K562 (cell line): ENCODE measurements at regions of chr11 and their contacts with region 1.

Region 1: DNA sequence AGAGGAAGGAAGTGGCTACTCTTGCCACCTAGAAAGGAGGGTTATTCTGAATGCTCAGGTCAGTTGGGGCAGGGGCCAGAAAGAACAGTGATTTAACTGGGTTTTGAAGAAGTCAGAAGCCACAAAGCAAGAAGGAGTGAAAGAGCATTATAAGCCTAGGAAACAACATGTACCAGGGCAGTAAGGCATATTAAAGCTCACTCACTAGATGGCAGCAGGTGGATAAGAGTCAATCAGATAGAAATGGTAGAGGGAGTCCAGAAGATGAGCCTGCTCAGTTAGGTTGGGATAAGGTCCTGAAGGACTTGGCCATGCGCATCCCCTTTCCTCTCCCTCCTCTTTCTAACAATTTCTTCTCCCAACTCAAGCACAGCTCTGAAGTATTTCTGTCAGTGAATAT is 22.0 kb upstream of the PATE1 start:
- DNase-seq: peak in 2 of 4 experiments; percentile 9 to 11
- ATAC-seq: peak; percentile 60; the same call in 2 of the 3 replicates
- H3K4me3 ChIP-seq: no peak overlapping the region
- H3K27ac ChIP-seq: no peak overlapping the region
- H3K4me1 ChIP-seq: no peaks in the 10 kb centered on the region
- H3K27me3 ChIP-seq: peaks cover 10 to 22% of the 10 kb centered on the region in 2 experiments; a peak in 4 of 5 replicates
- CTCF ChIP-seq: peak in 2 of 3 experiments; percentile 7 to 51; a peak in 3 of 6 replicates
- EP300 ChIP-seq: no peak
- POLR2A ChIP-seq: no peak
- RAD21 ChIP-seq: peak; percentile 16 to 45; a peak in 3 of 4 replicates

Region 2: DNA sequence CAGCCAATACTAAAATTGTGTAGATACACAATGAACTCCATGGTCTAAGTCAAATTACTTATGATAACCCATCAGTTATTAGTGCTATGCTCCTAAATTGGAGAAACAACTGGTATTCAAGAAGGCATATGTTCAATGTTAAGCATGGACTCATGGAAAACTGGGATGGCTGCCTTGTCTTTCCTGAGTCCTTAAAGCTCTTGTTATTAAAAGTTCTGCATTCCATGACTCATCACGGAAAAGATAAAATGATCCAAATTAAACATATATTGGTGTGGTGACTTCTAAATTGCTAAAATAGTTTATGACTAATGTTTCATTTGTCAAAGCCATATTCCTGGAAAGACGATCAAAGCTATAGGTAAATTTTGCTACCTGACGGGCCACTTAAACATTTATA is 164.2 kb before region 1 on chr11:
- CTCF ChIA-PET with region 1: no interaction called
- POLR2A ChIA-PET with region 1: no interaction called
- in situ Hi-C with region 1: no loop called
- intact Hi-C with region 1: loop called (anchors 10 kb)
- DNase-seq: no peak
- ATAC-seq: no peak
- H3K4me3 ChIP-seq: no peak overlapping the region
- H3K27ac ChIP-seq: no peak overlapping the region
- H3K4me1 ChIP-seq: peaks cover 7 to 21% of the 10 kb centered on the region in 2 experiments
- H3K27me3 ChIP-seq: no peaks in the 10 kb centered on the region
- CTCF ChIP-seq: no peak
- EP300 ChIP-seq: no peak
- POLR2A ChIP-seq: no peak
- RAD21 ChIP-seq: no peak

Region 3: GRCh38 chr11:125869521-125869920 is 145.4 kb after region 1 on chr11:
- CTCF ChIA-PET with region 1: interaction called, 3 read pairs
- POLR2A ChIA-PET with region 1: no interaction called
- in situ Hi-C with region 1: no loop called
- intact Hi-C with region 1: loop called (anchors 2 kb)
- DNase-seq: no peak
- ATAC-seq: no peak; the same call in 2 of the 3 replicates
- H3K4me3 ChIP-seq: no peak overlapping the region
- H3K27ac ChIP-seq: no peak overlapping the region
- H3K4me1 ChIP-seq: peaks cover 0 to 3% of the 10 kb centered on the region in 2 experiments; a peak in 2 of 5 replicates
- H3K27me3 ChIP-seq: no peaks in the 10 kb centered on the region
- CTCF ChIP-seq: peak in 1 of 3 experiments; percentile 42; a peak in 2 of 6 replicates
- EP300 ChIP-seq: no peak
- POLR2A ChIP-seq: no peak
- RAD21 ChIP-seq: peak; percentile 27 to 57